Activated CD4-positive, alpha-beta memory T cell treated with anti-CD3 and anti-CD28 coated beads for 36 hours (primary cell): ENCODE measurements at regions of chr1 and their contacts with region 1.

Region 1: DNA sequence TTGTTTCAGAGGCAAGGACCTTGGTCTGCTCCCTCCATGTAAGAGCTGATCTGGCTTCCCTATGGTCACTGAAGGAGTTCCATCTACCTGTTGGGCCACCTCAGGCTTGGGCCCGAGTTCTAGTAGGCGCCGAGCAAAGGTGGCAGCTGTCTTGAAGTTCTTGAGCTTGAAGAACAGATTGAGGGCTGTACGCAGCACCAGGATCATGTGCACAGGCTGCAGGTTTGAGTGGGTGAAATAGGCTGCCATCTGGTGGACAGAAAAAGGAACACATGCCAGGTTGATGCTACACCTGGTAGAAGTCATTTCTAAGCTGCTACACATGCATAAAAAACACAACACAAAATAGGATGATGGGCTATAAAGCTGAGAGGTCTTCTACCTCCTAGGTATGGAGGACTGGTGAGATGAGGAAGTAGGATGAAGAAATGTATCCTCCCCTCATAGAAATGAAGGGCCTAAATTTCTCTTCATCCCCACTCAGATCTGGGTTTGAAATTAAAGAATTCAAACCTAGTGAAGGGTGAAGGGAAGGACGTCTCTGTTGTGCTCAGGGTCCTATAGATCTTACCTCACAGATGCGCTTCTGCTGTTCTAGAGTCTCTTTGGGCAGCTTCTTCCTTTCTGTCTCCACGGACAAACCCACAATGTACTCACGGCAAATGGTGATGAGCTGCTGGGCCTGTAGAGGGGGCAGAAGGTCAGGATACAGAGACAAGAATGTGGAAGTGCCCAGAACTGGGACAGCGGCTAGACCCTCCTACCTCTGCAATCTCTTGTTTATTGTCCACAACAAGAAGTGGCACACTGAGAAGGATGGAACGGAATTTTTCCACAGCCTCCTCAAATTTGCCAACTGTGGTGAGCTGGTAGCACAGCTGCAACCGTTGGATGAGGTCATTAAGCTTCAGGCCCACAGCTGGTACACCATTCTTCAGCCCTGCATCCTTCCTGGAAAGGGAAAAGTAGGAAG is 6.6 kb upstream of the PEX19 start:
- DNase-seq: peak; percentile 76
- H3K4me3 Mint-ChIP-seq: no peak overlapping the region
- H3K27ac Mint-ChIP-seq: peak overlapping the region; percentile 47
- H3K4me1 Mint-ChIP-seq: peaks cover 3% of the 10 kb centered on the region
- H3K27me3 Mint-ChIP-seq: no peaks in the 10 kb centered on the region

Region 2: GRCh38 chr1:160098852-160099561 is 192.5 kb before region 1 on chr1:
- CTCF ChIA-PET with region 1: interaction called, 77 read pairs
- POLR2A ChIA-PET with region 1: no interaction called
- intact Hi-C with region 1: loop called (anchors 2 kb)
- DNase-seq: peak; percentile 99
- H3K4me3 Mint-ChIP-seq: peak overlapping the region; percentile 69
- H3K27ac Mint-ChIP-seq: peak overlapping the region; percentile 76
- H3K4me1 Mint-ChIP-seq: peaks cover 37% of the 10 kb centered on the region
- H3K27me3 Mint-ChIP-seq: no peaks in the 10 kb centered on the region

Region 3: GRCh38 chr1:160193091-160193819 is 98.3 kb before region 1 on chr1:
- CTCF ChIA-PET with region 1: interaction called, 156 read pairs
- POLR2A ChIA-PET with region 1: interaction called, 3 read pairs
- intact Hi-C with region 1: loop called (anchors 1 kb)
- DNase-seq: peak; percentile 86
- H3K4me3 Mint-ChIP-seq: no peak overlapping the region
- H3K27ac Mint-ChIP-seq: no peak overlapping the region
- H3K4me1 Mint-ChIP-seq: no peaks in the 10 kb centered on the region
- H3K27me3 Mint-ChIP-seq: no peaks in the 10 kb centered on the region

Region 4: DNA sequence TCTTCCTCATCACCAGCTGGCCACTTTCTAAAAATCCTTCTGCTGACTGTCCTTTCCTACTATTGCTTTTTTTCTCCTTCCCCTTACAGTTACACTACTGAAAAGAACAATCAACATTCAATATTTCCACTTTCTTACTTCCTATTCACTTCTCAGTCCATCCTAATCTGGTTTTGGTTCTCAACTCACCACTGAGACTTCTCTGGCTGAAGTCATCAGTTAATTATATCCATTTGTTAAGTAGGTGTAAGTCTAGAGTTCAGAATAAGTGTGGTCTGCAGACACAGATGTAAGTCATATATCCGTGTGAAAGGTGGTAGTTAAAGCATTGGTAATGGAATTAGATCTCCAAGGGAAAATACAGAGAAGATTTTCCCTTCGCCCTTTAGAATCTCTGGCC is 64.9 kb before region 1 on chr1:
- CTCF ChIA-PET with region 1: interaction called, 36 read pairs
- POLR2A ChIA-PET with region 1: no interaction called
- intact Hi-C with region 1: no loop called
- DNase-seq: no peak
- H3K4me3 Mint-ChIP-seq: no peak overlapping the region
- H3K27ac Mint-ChIP-seq: no peak overlapping the region
- H3K4me1 Mint-ChIP-seq: no peaks in the 10 kb centered on the region
- H3K27me3 Mint-ChIP-seq: no peaks in the 10 kb centered on the region

Region 5: DNA sequence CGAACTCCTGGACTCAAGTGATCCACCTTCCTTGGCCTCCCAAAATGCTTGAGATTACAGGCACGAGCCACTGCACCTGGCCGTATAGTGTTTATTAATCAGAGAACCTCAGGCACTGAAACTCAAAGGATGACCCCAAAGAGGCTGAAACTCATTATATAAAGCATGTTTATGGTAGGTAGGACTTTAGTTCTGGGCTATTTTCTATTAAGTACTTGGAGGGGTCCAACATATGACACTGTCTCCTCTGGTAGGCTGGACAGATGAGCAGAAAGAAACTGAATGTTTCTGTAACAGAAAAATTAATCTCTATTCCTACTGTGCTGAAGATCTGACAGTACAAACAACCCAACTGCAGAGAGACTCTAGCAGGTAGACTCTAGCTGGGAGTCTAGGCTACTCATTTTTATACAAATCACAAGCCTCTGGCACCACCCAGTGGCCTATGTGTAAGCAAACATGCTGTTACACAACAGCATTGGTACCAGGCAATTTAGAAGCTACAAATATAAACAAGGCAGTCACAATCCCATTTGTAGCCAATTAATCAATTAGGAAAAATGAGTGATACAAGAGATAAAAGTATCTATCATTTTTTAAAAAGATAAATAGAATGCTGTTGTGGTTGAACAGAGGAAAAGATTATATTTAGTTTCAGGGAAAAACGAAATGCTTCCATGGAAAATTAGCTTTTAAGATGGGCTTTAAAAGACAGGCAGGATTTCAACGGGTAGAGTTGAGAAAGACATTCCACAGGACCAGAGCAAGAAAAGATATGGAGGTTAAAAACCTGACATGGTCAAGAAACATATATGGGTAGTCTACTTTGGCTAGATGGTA is 39.6 kb before region 1 on chr1:
- CTCF ChIA-PET with region 1: interaction called, 69 read pairs
- POLR2A ChIA-PET with region 1: interaction called, 3 read pairs
- intact Hi-C with region 1: no loop called
- DNase-seq: peak; percentile 57
- H3K4me3 Mint-ChIP-seq: no peak overlapping the region
- H3K27ac Mint-ChIP-seq: peak overlapping the region; percentile 5
- H3K4me1 Mint-ChIP-seq: peaks cover 11% of the 10 kb centered on the region
- H3K27me3 Mint-ChIP-seq: no peaks in the 10 kb centered on the region

Region 6: DNA sequence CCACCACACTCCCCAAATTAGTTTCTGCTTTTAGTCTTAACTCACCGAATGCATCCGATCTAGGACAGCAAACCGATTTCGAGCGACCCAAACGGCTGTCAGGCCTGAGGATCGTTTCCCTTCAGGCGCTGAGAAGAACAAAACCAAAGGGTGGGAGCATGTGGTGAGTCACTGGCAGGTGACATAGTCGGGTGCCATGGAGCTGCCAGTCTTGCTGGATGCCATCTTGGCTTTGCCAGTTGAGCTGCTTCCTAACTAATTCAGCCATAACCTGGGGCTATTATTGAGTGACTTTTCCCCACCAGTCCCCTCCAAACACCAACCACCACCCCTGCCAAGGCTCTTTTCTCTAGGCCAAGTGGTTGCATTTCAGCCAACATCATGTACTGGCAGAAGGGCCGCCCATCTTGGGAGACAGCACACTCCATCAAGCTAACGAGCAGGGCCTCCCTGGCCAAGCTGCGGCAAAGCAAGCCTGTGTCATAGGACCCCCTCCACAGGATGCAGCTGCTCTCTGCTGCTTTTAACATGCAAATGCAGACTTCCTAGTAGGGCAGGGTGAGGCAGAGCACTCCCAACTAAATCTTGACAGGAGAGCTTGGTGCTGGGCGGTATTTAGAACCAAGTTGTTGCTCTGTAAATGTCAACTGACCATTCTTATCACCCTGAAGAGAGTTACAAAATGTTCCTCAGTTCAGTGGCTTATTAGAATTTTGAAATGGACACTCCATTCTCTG is 15.8 kb after region 1 on chr1:
- CTCF ChIA-PET with region 1: interaction called, 24 read pairs
- POLR2A ChIA-PET with region 1: no interaction called
- intact Hi-C with region 1: no loop called
- DNase-seq: no peak
- H3K4me3 Mint-ChIP-seq: no peak overlapping the region
- H3K27ac Mint-ChIP-seq: no peak overlapping the region
- H3K4me1 Mint-ChIP-seq: no peaks in the 10 kb centered on the region
- H3K27me3 Mint-ChIP-seq: no peaks in the 10 kb centered on the region

Region 7: GRCh38 chr1:160332516-160332915 is 41.0 kb after region 1 on chr1:
- CTCF ChIA-PET with region 1: interaction called, 21 read pairs
- POLR2A ChIA-PET with region 1: no interaction called
- intact Hi-C with region 1: no loop called
- DNase-seq: no peak
- H3K4me3 Mint-ChIP-seq: no peak overlapping the region
- H3K27ac Mint-ChIP-seq: no peak overlapping the region
- H3K4me1 Mint-ChIP-seq: no peaks in the 10 kb centered on the region
- H3K27me3 Mint-ChIP-seq: no peaks in the 10 kb centered on the region

Region 8: DNA sequence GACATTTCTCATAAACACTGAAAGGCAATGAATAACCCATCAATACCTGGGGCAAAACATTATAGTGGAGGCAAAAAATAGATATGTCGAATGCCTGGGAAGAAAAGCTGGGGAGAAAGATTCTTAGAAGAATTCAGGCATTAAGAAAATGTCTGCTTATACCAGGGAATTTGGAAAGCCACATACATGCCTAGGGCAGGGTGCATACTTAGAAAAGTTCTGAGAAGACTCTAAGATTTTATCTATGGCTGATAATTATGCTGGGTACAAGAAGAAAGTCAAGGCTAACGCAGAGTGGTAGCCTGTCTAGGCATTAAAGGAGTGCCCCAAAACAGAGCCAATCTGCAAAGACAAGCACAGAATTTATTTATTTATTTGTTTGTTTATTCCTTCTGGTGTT is 213.1 kb after region 1 on chr1:
- CTCF ChIA-PET with region 1: no interaction called
- POLR2A ChIA-PET with region 1: no interaction called
- intact Hi-C with region 1: no loop called
- DNase-seq: no peak
- H3K4me3 Mint-ChIP-seq: no peak overlapping the region
- H3K27ac Mint-ChIP-seq: no peak overlapping the region
- H3K4me1 Mint-ChIP-seq: peaks cover 60% of the 10 kb centered on the region
- H3K27me3 Mint-ChIP-seq: no peaks in the 10 kb centered on the region